ENCODE measurements at regions of chr14 and their contacts with region 1.

Region 1: GRCh38 chr14:71799841-71800240 is 132.4 kb upstream of the RGS6 start:
- DNase-seq: no peak
- CTCF ChIP-seq: no peak

Region 2: GRCh38 chr14:70748422-70748821 is 1051.4 kb before region 1 on chr14:
- CTCF ChIA-PET with region 1: no interaction called
- POLR2A ChIA-PET with region 1: interaction called, 10 read pairs
- DNase-seq: no peak
- CTCF ChIP-seq: no peak

Region 3: DNA sequence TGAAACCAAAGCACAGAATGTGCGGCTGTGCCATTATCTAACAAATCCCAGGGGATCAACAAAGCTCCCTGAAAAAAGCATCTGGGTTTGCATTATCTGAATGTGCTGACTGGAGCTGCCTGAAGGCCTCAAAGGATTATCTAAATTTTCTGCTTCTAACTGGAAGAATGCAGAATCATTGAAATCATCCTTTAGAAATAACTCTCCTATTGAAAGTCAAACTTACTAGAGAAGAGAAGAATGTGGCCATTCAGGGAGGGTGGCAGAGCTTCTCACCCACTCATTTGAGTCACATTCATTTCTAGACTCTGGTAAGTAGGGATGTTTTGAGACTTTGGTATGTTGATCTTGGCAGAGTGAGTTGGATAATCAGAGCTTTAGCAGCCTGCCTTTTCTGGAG is 88.2 kb before region 1 on chr14:
- CTCF ChIA-PET with region 1: no interaction called
- POLR2A ChIA-PET with region 1: no interaction called
- DNase-seq: no peak
- CTCF ChIP-seq: no peak

Measured in GM10248 (cell line).